Transverse colon (tissue), 4 donors: ENCODE measurements at regions of chr7 and their contacts with region 1.

Region 1: GRCh38 chr7:64277630-64278029 is 36.1 kb upstream of the ZNF736 start:
- DNase-seq: no peak
- H3K4me3 ChIP-seq: no peak overlapping the region
- H3K27ac ChIP-seq: no peak overlapping the region
- H3K4me1 ChIP-seq: no peaks in the 10 kb centered on the region
- H3K27me3 ChIP-seq: no peaks in the 10 kb centered on the region
- CTCF ChIP-seq: no peak
- EP300 ChIP-seq: no peak
- POLR2A ChIP-seq: no peak

Region 2: GRCh38 chr7:64037095-64037494 is 240.5 kb before region 1 on chr7:
- in situ Hi-C with region 1: no loop called
- intact Hi-C with region 1: no loop called
- DNase-seq: no peak
- H3K4me3 ChIP-seq: no peak overlapping the region
- H3K27ac ChIP-seq: no peak overlapping the region
- H3K4me1 ChIP-seq: no peaks in the 10 kb centered on the region
- H3K27me3 ChIP-seq: no peaks in the 10 kb centered on the region
- CTCF ChIP-seq: no peak
- EP300 ChIP-seq: no peak
- POLR2A ChIP-seq: no peak

Region 3: GRCh38 chr7:64174945-64175344 is 102.7 kb before region 1 on chr7:
- in situ Hi-C with region 1: no loop called
- intact Hi-C with region 1: no loop called
- DNase-seq: no peak
- H3K4me3 ChIP-seq: no peak overlapping the region
- H3K27ac ChIP-seq: no peak overlapping the region
- H3K4me1 ChIP-seq: no peaks in the 10 kb centered on the region
- H3K27me3 ChIP-seq: no peaks in the 10 kb centered on the region
- CTCF ChIP-seq: no peak
- EP300 ChIP-seq: no peak
- POLR2A ChIP-seq: no peak

Region 4: DNA sequence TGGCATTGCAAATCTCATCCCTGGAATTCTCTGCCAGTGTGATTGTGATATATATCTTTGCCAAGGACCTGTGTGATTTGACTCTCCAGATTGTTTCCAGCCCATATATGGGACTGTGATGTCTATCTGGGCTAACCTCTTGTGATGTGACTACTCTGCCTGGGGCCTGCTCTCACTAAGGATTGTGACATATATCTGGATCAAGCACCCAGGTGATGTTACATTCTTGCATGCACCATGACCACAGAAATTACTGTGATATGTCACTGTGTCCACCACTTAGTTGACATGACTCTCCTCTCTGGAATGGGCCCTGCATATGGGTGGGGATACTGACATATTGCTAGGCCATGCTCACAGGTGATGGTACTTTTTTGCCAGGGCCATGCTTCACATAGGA is 122.8 kb after region 1 on chr7:
- in situ Hi-C with region 1: loop called in 1 of 4 experiments (anchors 25 kb)
- intact Hi-C with region 1: no loop called
- DNase-seq: no peak
- H3K4me3 ChIP-seq: no peak overlapping the region
- H3K27ac ChIP-seq: no peak overlapping the region
- H3K4me1 ChIP-seq: no peaks in the 10 kb centered on the region
- H3K27me3 ChIP-seq: no peaks in the 10 kb centered on the region
- CTCF ChIP-seq: no peak
- EP300 ChIP-seq: no peak
- POLR2A ChIP-seq: no peak

Region 5: DNA sequence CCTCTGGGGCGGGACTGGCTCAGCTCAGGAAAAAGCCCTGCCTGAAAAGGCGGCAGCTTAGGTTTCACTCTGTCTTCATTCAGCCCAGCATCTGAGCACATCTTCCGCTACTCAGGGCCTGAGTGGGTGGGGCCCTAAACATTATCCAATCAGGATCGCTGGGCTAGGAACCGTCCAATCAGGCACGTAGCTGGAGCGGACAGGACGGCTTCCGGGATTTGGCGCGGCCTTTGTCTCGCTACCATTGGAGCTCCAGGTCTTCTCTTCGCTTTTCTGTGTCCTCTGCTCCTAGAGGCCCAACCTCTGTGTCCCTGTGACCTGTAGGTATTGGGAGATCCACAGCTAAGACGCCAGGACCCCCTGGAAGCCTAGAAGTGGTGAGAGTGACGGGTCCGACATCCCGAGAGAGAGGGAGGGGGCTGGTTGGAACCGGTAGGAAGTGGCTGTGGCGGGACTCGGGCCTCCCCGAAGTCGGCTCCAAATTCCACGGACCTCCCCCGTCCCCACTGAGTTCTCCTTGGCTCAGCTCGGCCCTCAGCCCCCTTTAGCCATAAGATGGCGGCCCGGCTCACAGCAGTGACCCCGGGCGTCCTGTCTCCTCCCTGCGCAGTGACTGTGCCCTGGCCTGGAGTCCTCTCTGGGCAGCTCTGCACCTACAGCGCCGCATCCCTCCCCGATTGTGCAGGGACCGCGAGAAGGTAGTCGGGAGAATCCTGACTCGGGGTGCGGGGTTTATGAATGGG is 186.2 kb after region 1 on chr7:
- in situ Hi-C with region 1: no loop called
- intact Hi-C with region 1: no loop called
- DNase-seq: peak; percentile 10
- H3K4me3 ChIP-seq: peak overlapping the region in 3 of 4 donors; percentile 32 to 34 (median 33)
- H3K27ac ChIP-seq: peak overlapping the region in 1 of 4 donors; percentile 35
- H3K4me1 ChIP-seq: no peaks in the 10 kb centered on the region
- H3K27me3 ChIP-seq: no peaks in the 10 kb centered on the region
- CTCF ChIP-seq: no peak
- EP300 ChIP-seq: no peak
- POLR2A ChIP-seq: no peak